Psoas muscle (tissue), 8 donors: ENCODE measurements at regions of chr2 and their contacts with region 1.

Region 1: GRCh38 chr2:128232965-128233789 is 85.5 kb downstream of the HS6ST1 start:
- DNase-seq: peak; percentile 89 to 95
- ATAC-seq: peak; percentile 97 to 99 (median 98)
- H3K4me3 ChIP-seq: peak overlapping the region; percentile 91
- H3K27ac ChIP-seq: peak overlapping the region; percentile 92
- H3K4me1 ChIP-seq: peaks cover 4% of the 10 kb centered on the region
- H3K27me3 ChIP-seq: no peaks in the 10 kb centered on the region
- CTCF ChIP-seq: peak; percentile 88

Region 2: DNA sequence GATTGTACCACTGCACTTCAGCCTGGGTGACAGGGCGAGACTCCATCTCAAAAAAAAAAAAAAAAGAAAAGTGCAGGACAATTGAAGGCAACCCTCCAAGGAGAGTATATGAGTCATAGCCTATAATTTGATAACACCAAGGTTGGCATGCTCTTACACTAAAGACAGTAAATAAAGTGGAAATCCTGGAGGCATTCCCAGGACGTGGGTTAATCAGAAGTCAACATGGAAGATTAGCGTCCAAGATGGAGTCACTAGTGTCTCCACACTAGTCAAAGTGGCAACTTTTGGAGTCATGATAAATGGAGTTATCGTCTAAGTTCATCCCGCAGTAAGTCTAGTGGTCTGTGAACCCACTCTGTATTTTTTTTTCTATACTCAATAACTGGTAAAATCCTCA is 163.4 kb before region 1 on chr2:
- intact Hi-C with region 1: loop called in 1 of 2 experiments (anchors 10 kb)
- DNase-seq: no peak
- ATAC-seq: peak in 2 of 4 donors; percentile 39 to 43
- H3K4me3 ChIP-seq: no peak overlapping the region
- H3K27ac ChIP-seq: no peak overlapping the region
- H3K4me1 ChIP-seq: no peaks in the 10 kb centered on the region
- H3K27me3 ChIP-seq: no peaks in the 10 kb centered on the region
- CTCF ChIP-seq: no peak

Region 3: GRCh38 chr2:128178650-128179460 is 54.3 kb before region 1 on chr2:
- intact Hi-C with region 1: loop called (anchors 1 to 2 kb)
- DNase-seq: peak; percentile 59 to 79
- ATAC-seq: peak; percentile 88 to 94 (median 91)
- H3K4me3 ChIP-seq: no peak overlapping the region
- H3K27ac ChIP-seq: no peak overlapping the region
- H3K4me1 ChIP-seq: no peaks in the 10 kb centered on the region
- H3K27me3 ChIP-seq: no peaks in the 10 kb centered on the region
- CTCF ChIP-seq: peak; percentile 83

Region 4: GRCh38 chr2:128196471-128196931 is 36.7 kb before region 1 on chr2:
- intact Hi-C with region 1: loop called in 1 of 2 experiments (anchors 2 kb)
- DNase-seq: no peak
- ATAC-seq: no peak
- H3K4me3 ChIP-seq: no peak overlapping the region
- H3K27ac ChIP-seq: peak overlapping the region; percentile 36
- H3K4me1 ChIP-seq: peaks cover 40% of the 10 kb centered on the region
- H3K27me3 ChIP-seq: no peaks in the 10 kb centered on the region
- CTCF ChIP-seq: no peak